MCF 10A (cell line): ENCODE measurements at regions of chr10 and their contacts with region 1.

Region 1: GRCh38 chr10:116683821-116684220 is 58.5 kb downstream of the HSPA12A start:
- DNase-seq: no peak
- H3K4me3 Mint-ChIP-seq: no peak overlapping the region
- H3K27ac Mint-ChIP-seq: no peak overlapping the region
- H3K4me1 Mint-ChIP-seq: peaks cover 6% of the 10 kb centered on the region
- H3K27me3 Mint-ChIP-seq: no peaks in the 10 kb centered on the region
- CTCF ChIP-seq: no peak

Region 2: DNA sequence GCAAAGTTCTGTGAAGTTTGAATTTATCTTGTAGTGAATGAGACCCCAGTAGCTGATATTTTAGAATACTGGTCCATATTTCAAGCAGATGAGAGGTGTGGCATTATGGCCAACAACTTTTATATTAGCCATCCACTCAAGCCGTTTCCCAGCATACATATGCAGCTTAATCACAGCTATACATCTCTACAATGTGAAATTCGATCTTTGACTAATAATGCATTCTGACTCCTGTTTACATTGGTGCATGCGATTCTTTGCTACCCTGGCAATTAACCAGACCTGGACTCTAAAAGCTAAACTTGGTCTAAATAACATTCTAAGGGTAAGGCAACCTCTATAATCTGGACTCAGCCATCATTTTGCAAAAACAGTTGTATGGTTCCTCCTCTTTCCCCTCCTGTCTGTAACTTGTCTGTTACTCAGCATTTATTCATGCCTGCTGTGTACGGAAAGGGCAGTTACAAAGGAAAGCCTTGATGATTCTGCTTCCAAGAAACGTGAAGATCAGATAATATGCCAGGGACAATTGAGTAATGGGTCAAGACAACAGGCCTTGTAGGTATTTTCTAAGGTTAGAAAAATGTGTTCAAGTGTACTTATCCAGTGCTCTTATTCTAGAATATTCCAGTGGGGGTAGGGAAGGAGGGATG is 12.4 kb before region 1 on chr10:
- CTCF ChIA-PET with region 1: interaction called, 11 read pairs
- POLR2A ChIA-PET with region 1: no interaction called
- intact Hi-C with region 1: no loop called
- DNase-seq: no peak
- H3K4me3 Mint-ChIP-seq: no peak overlapping the region
- H3K27ac Mint-ChIP-seq: no peak overlapping the region
- H3K4me1 Mint-ChIP-seq: no peaks in the 10 kb centered on the region
- H3K27me3 Mint-ChIP-seq: no peaks in the 10 kb centered on the region
- CTCF ChIP-seq: no peak

Region 3: DNA sequence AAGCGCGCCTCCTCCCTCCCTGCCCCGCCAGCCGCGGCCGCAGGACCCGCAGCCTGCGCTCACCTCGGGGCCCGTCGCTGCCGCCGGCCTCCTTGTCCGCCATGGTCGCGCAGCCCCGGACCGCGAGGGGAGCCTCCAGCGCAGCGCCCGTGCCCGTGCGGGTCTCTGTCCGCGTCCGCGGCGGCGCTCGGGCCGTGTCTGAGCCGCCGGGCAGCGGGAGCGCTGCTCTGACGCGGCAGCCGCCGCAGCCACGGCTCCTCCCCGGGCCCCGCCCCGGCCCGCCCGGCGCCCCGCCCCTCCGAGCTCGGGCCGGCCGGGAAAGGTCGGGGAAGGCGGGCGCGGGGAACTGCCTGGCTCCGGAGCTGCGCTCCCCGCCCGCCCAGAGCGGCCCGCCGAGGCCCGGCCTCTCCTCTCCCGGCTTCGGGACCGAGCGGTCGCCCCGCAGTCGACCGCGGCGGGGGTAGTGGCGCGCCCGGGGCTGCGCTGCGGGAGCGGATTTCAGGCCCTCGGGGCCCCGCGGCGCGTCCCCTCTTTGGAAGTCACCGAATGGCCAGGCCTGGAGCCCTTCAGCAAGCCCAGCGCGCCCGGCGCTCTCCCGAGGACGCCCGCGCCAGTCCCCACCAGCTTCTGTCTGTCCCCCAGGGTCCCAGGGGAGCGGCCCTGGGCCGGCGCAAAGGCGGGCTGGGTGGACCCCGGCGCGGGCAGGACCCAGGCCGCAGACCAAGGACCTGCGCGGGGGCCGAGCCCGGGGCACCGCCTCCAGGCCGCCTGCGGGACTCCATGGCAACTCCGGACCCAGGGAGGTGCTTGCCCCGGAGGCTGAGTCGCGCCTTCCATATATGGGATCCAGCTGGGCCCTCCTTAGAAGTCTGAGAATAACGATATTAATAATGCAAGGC is 58.8 kb after region 1 on chr10 and contains the start of gene HSPA12A:
- CTCF ChIA-PET with region 1: interaction called, 5 read pairs
- POLR2A ChIA-PET with region 1: no interaction called
- intact Hi-C with region 1: loop called (anchors 2 kb)
- DNase-seq: peak; percentile 79
- H3K4me3 Mint-ChIP-seq: peak within 1 kb of the TSS; percentile 71
- H3K27ac Mint-ChIP-seq: no peak within 1 kb of the TSS
- H3K4me1 Mint-ChIP-seq: no peaks in the 10 kb centered on the region
- H3K27me3 Mint-ChIP-seq: no peaks in the 10 kb centered on the region
- CTCF ChIP-seq: no peak
- total RNA-seq, gene HSPA12A: 9.1 and 13.1 TPM in 2 replicates

Region 4: DNA sequence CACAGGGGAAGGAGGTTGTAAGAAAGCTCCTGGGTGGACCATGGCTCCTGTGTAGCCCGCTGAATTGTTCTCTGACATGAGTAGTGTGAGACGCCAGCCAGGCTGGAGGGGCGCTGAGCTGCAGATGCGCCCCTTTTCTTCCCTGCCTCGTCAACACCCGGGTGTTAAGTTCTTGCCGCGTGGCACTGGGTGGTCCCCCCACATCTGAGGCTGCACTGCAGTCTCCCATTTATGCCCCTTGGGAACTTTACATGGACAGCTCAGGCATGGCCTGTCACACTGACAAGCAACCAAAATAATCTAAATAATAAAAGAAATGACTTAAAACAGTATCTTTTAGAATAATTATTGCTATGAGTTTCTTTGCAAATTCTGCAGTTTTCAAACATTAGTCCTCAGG is 93.2 kb after region 1 on chr10:
- CTCF ChIA-PET with region 1: interaction called, 17 read pairs
- POLR2A ChIA-PET with region 1: no interaction called
- intact Hi-C with region 1: no loop called
- DNase-seq: no peak
- H3K4me3 Mint-ChIP-seq: no peak overlapping the region
- H3K27ac Mint-ChIP-seq: no peak overlapping the region
- H3K4me1 Mint-ChIP-seq: peaks cover 25% of the 10 kb centered on the region
- H3K27me3 Mint-ChIP-seq: no peaks in the 10 kb centered on the region
- CTCF ChIP-seq: no peak